Heart left ventricle (tissue), 16 donors: ENCODE measurements at regions of chr3 and their contacts with region 1.

Region 1: GRCh38 chr3:21752749-21753347 is 1.8 kb upstream of the ZNF385D start:
- DNase-seq: peak in 3 of 5 donors; percentile 29 to 36 (median 29)
- ATAC-seq: peak in 3 of 4 donors; percentile 61 to 78 (median 75)
- H3K4me3 ChIP-seq: no peak overlapping the region
- H3K27ac ChIP-seq: peak overlapping the region in 3 of 12 donors; percentile 5 to 33 (median 13)
- H3K4me1 ChIP-seq: peaks cover 0 to 34% (median 5%) of the 10 kb centered on the region in 12 donors
- H3K27me3 ChIP-seq: no peaks in the 10 kb centered on the region
- CTCF ChIP-seq: peak; percentile 60 to 91 (median 76)
- POLR2A ChIP-seq: no peak

Region 2: GRCh38 chr3:20511863-20512505 is 1240.9 kb before region 1 on chr3:
- intact Hi-C with region 1: loop called in 2 of 10 experiments (anchors 5 kb)
- DNase-seq: no peak
- ATAC-seq: peak; percentile 47 to 91 (median 86)
- H3K4me3 ChIP-seq: no peak overlapping the region
- H3K27ac ChIP-seq: no peak overlapping the region
- H3K4me1 ChIP-seq: no peaks in the 10 kb centered on the region
- H3K27me3 ChIP-seq: no peaks in the 10 kb centered on the region
- CTCF ChIP-seq: peak; percentile 39 to 78 (median 64)
- POLR2A ChIP-seq: no peak

Region 3: GRCh38 chr3:21645121-21645897 is 107.5 kb before region 1 on chr3:
- intact Hi-C with region 1: loop called in 1 of 10 experiments (anchors 5 kb)
- DNase-seq: peak; percentile 72 to 79 (median 74)
- ATAC-seq: peak; percentile 78 to 97 (median 93)
- H3K4me3 ChIP-seq: no peak overlapping the region
- H3K27ac ChIP-seq: peak overlapping the region in 11 of 12 donors; percentile 41 to 78 (median 65)
- H3K4me1 ChIP-seq: peaks cover 3 to 33% (median 25%) of the 10 kb centered on the region in 12 donors
- H3K27me3 ChIP-seq: no peaks in the 10 kb centered on the region
- CTCF ChIP-seq: no peak
- POLR2A ChIP-seq: no peak

Region 4: DNA sequence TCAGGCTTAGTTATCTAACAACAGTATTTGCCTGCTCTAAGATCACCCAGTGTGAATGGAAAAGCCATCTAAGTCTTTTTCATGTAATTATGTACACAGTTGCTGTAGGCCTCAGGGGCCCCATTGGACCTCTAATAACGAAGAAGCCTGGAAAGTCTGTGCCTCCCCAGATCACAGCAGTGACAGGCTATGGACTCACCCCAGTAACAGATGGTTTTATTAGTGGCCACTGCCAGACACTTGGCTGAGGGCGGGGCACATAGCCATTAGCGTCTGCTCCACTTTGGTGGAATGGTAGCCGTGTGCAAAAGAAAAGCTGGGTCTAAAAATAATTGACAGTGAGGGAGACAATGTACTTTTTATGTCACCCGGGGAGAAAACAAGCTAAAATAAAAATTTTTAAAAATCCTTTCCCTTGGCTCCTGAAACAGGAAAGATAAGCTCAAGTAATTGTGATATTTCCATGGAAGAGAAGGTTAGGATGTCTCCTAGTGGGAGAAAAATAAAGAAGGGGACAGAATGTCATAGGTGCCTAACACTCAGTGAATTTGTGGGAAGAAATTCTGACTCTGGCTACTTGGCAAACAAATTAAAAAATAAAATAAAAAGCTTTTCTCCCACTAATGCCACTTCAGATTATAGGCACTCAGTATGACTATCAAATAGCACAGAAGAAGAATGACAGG is 42.4 kb after region 1 on chr3:
- intact Hi-C with region 1: loop called in 7 of 10 experiments (anchors 2 to 5 kb)
- DNase-seq: peak; percentile 76 to 90 (median 86)
- ATAC-seq: peak; percentile 96 to 99 (median 98)
- H3K4me3 ChIP-seq: peak overlapping the region in 1 of 12 donors; percentile 1
- H3K27ac ChIP-seq: peak overlapping the region; percentile 25 to 78 (median 66)
- H3K4me1 ChIP-seq: peaks cover 3 to 63% (median 33%) of the 10 kb centered on the region in 12 donors
- H3K27me3 ChIP-seq: no peaks in the 10 kb centered on the region
- CTCF ChIP-seq: peak in 3 of 12 donors; percentile 11 to 44 (median 39)
- POLR2A ChIP-seq: no peak

Region 5: DNA sequence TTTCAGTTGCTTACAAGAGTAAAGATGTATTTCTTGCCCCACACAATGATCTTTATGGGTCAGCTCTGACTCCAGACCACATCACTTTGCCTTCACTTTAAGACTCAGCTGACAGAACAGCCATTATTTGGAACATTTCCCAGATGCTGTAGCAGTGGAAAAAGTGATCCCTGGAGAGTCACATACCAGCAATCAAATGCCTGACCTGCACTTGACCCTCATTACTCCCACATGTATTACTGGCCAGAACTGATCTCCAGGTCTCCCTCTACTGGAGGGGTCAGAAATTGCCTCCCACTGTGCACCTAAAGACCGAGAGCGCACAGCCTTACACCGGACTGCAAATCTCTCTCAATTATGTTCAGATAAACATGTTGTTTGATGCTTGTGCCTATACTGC is 86.7 kb after region 1 on chr3:
- intact Hi-C with region 1: loop called in 5 of 10 experiments (anchors 2 to 10 kb)
- DNase-seq: peak in 4 of 5 donors; percentile 43 to 73 (median 60)
- ATAC-seq: peak; percentile 95 to 98 (median 96)
- H3K4me3 ChIP-seq: no peak overlapping the region
- H3K27ac ChIP-seq: peak overlapping the region in 9 of 12 donors; percentile 17 to 62 (median 54)
- H3K4me1 ChIP-seq: peaks cover 0 to 10% (median under 1%) of the 10 kb centered on the region in 12 donors
- H3K27me3 ChIP-seq: no peaks in the 10 kb centered on the region
- CTCF ChIP-seq: peak; percentile 32 to 72 (median 56)
- POLR2A ChIP-seq: no peak

Region 6: DNA sequence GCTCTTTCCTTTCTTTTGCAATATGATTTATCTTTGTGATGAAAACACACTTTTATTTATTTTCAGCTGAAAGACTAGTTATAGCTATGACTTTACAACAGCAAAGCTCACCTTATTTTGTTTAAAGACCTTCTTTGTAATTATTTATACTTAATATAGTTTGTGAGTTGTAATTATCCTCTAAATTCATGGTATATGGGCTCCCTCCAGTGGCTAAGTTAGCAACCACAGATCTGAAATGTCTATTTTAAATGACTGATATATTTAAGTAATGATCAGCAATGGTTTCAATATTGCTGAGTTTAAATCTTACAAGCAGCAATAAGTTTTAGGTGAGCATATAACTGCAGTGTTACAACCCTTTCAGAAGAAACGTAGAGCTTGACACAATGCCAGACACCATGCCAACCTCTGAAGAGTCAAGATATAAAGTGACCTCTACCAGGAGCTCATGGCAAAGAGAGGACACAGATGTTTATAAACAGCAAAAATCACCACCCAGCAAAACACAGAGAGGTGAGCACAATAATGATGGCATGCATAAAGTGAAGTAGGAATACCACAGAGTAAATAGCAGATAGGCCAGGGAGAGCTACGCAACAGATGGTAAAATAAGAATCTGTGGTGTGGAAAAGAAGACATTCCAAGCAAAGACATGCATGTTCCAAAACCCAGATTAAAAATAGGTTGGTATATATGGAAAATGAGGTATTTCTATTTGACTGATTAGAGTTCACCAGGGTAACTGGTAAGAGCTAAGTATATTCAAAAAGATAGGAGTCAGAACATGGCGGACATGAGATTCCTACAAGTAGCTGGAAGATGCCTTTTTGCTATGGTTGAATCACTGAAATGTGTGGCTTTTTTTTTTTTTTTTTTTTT is 141.9 kb after region 1 on chr3:
- intact Hi-C with region 1: loop called (anchors 1 to 5 kb)
- DNase-seq: peak in 1 of 5 donors; percentile 24
- ATAC-seq: peak; percentile 30 to 62 (median 50)
- H3K4me3 ChIP-seq: peak overlapping the region in 1 of 12 donors; percentile 15
- H3K27ac ChIP-seq: peak overlapping the region in 3 of 12 donors; percentile 16 to 39 (median 21)
- H3K4me1 ChIP-seq: peaks cover 0 to 24% (median 4%) of the 10 kb centered on the region in 12 donors
- H3K27me3 ChIP-seq: no peaks in the 10 kb centered on the region
- CTCF ChIP-seq: peak; percentile 45 to 84 (median 70)
- POLR2A ChIP-seq: no peak

Region 7: GRCh38 chr3:22117751-22118346 is 365.0 kb after region 1 on chr3:
- intact Hi-C with region 1: loop called in 7 of 10 experiments (anchors 5 to 10 kb)
- DNase-seq: no peak
- ATAC-seq: no peak
- H3K4me3 ChIP-seq: no peak overlapping the region
- H3K27ac ChIP-seq: no peak overlapping the region
- H3K4me1 ChIP-seq: no peaks in the 10 kb centered on the region
- H3K27me3 ChIP-seq: no peaks in the 10 kb centered on the region
- CTCF ChIP-seq: peak; percentile 52 to 80 (median 66)
- POLR2A ChIP-seq: no peak